Left ventricle myocardium inferior (tissue), 1 donor: ENCODE measurements at regions of chr12 and their contacts with region 1.

Region 1: DNA sequence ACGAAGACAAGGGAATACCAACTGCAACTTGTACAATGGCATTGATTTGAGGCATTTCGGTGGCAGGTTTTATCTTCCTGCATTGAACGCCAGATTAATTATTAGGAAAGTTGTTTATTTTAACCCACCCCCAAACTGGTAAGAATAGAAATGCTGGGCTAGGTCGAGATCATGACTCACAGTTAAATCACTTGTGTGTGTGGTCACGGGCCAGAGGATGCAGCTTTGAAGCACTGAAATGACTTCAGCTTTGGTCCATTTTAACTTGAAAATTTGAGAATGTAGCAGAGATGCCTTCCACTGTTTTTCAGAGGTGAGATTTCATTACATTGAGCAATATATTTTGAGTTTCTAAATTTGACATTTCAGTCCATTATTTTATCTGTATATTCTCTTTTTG is 23.6 kb upstream of the KCNH3 start:
- DNase-seq: no peak
- H3K4me3 ChIP-seq: no peak overlapping the region
- H3K27ac ChIP-seq: no peak overlapping the region
- H3K4me1 ChIP-seq: peaks cover 5% of the 10 kb centered on the region
- H3K27me3 ChIP-seq: no peaks in the 10 kb centered on the region
- CTCF ChIP-seq: no peak

Region 2: DNA sequence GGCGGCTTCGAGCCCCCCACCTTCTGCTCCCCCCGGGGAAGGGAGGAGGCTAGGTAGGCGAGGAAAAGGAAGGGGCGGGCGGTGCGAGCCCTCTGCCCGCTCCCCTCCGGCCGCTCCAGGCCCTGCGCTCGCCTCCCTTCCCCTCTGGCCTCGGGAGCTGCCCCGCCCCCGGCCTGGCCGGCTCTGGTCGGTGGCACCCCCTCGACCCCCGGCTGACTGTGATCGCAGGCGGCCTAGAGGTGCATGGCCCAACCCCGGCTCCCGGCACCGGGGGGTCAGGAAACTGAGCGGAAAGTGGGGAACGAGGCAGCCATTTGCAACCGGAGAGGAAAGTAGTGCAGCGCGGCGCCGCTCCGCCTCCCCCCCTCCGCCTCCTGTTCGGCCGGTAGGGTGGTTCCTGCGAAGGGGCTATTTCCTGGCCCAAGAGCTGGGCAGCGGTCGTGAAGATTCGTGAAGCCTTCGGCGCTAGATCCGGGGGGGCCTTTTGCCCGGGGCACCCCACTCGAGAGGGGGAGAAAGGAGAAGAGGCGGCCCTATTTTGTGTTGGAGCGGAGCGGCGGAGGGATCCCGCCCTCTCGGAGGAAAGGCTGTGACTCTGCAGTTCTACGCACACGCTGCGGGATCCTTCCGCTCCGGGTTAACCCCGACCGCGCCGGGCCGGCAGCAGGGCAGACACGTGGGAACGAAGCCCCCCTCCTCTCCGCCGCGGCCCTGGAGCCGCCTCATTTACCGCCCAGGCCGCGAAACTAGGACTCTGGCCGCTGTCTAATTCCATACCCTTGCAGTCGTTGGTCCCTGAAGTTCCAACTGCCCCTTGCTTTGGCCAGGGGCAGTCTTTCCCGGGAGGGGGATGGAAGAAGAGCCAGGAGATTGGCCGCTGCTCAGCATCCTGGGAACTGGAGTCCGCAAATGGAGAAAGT is 454.8 kb before region 1 on chr12 and contains the start of gene KMT2D:
- intact Hi-C with region 1: no loop called
- DNase-seq: peak; percentile 93
- H3K4me3 ChIP-seq: peak within 1 kb of the TSS; percentile 99
- H3K27ac ChIP-seq: peak within 1 kb of the TSS; percentile 100
- H3K4me1 ChIP-seq: peaks cover 66% of the 10 kb centered on the region
- H3K27me3 ChIP-seq: no peaks in the 10 kb centered on the region
- CTCF ChIP-seq: peak; percentile 56
- total RNA-seq, gene KMT2D: 38.5 TPM

Region 3: GRCh38 chr12:49358483-49359141 is 156.7 kb before region 1 on chr12:
- intact Hi-C with region 1: loop called (anchors 2 kb)
- DNase-seq: no peak
- H3K4me3 ChIP-seq: no peak overlapping the region
- H3K27ac ChIP-seq: no peak overlapping the region
- H3K4me1 ChIP-seq: no peaks in the 10 kb centered on the region
- H3K27me3 ChIP-seq: peaks cover 30% of the 10 kb centered on the region
- CTCF ChIP-seq: peak; percentile 89